ENCODE measurements at regions of chr9 and their contacts with region 1.

Region 1: GRCh38 chr9:127214421-127215267 is 49.9 kb upstream of the GARNL3 start:
- DNase-seq: peak; percentile 92
- H3K27ac ChIP-seq: no peak overlapping the region
- CTCF ChIP-seq: peak; percentile 99

Region 2: GRCh38 chr9:126939821-126940221 is 274.8 kb before region 1 on chr9:
- CTCF ChIA-PET with region 1: interaction called, 14 read pairs
- POLR2A ChIA-PET with region 1: no interaction called
- DNase-seq: no peak
- H3K27ac ChIP-seq: no peak overlapping the region
- CTCF ChIP-seq: no peak

Region 3: DNA sequence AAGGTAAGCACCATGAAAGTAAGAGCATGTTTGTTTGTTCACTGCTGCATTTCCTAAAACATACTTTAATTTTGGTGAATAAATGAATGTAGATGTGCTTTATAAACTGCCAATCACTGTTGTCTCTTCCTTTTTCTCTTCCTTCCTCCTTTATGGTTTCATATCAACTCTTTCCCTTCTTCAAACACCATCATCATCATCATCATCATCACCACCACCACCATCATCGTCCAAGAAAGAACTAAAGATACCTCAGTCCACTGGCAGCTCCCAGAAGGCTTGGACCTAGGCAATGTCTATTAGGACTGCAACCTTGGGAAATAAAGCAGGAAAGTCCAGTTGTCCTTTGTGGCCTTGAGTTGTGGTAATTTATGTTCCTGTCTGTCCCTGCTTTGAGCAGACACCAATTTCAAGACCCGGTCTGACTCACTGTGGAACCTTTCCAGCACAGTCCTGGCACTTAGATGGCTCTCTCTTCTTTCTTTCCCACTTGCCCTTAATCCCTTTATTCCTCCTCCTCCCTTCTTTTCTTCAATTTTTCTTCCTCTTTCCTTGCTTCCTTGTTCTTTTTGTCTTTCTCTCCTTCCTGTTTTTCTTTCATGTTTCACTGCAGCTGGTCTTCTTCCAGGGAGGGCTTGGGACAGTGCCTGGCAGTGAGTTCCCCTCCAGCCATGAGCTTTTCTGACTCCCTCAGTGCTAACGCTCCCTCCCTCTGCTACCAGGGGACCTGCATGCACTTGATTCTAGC is 191.6 kb before region 1 on chr9:
- CTCF ChIA-PET with region 1: no interaction called
- POLR2A ChIA-PET with region 1: no interaction called
- DNase-seq: no peak
- H3K27ac ChIP-seq: peak overlapping the region; percentile 25; the same call in 1 of the 2 replicates
- CTCF ChIP-seq: no peak

Region 4: GRCh38 chr9:127058011-127058644 is 156.5 kb before region 1 on chr9:
- CTCF ChIA-PET with region 1: no interaction called
- POLR2A ChIA-PET with region 1: no interaction called
- DNase-seq: no peak
- H3K27ac ChIP-seq: no peak overlapping the region
- CTCF ChIP-seq: no peak

Region 5: DNA sequence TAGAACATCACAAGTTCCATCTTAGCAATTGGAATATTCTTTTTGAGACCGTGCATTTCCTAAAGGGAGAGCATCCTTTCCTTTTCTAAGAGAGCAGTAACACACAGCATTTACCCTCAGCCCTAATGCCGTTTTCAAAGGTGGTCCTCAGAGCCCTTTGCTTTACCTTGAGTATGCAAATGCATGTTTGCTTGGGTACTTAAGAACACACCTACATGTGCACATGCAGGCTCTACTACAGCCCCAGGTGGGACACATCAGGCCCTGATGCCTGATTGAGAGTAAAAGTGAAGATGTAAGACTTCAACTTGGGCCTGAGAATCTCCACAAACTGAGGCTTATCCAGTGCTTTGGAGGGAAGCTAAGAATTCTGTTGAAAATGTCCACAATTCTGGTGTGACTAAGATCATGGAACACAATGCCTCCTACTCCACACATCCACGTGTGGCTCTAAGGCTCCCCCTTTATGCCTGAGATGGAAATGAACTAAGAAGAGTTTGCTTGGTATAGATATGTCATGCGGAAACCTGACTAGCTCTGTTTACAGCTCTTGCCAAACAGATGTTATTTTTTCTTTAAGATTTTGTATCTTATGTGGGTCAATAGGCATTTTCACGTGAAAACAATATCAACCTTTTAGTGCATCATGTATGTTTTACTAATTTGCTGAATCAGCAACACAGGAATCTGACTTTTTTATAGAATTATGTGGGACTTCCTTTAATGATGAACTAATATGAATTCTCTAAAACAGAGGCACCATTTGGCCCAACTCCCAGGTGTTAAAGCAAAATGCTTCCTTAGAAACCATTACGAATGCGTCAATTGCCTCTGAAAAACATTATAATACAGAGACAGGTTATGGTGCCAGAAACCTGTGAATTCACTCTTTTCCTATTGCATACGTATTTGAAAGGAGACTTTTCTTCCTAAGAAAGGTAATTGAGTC is 133.5 kb after region 1 on chr9:
- CTCF ChIA-PET with region 1: interaction called, 15 read pairs
- POLR2A ChIA-PET with region 1: no interaction called
- DNase-seq: peak; percentile 59
- H3K27ac ChIP-seq: no peak overlapping the region
- CTCF ChIP-seq: peak; percentile 59

Region 6: DNA sequence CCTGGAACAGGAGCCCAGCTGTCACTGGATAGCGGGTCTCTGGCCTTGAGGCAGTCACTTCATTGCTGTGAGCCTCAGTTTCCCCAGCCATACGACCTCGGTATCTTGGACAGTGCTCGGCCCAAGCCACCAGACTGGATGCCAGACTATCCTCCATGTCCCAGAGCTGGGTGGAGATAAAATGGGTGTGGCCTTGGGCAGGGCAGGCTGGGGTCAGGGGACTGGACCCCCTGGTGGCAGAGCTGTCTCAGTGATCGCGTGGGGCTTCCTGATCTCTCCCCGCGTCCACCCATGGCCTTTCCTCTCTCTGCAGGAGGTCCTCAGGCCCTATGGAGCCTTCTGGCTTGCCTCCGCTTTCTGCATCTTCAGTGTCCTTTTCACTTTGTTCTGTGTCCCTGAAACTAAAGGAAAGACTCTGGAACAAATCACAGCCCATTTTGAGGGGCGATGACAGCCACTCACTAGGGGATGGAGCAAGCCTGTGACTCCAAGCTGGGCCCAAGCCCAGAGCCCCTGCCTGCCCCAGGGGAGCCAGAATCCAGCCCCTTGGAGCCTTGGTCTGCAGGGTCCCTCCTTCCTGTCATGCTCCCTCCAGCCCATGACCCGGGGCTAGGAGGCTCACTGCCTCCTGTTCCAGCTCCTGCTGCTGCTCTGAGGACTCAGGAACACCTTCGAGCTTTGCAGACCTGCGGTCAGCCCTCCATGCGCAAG is 192.3 kb after region 1 on chr9:
- CTCF ChIA-PET with region 1: no interaction called
- POLR2A ChIA-PET with region 1: no interaction called
- DNase-seq: no peak
- H3K27ac ChIP-seq: peak overlapping the region; percentile 40
- CTCF ChIP-seq: no peak

Measured in RWPE1 (cell line).